ENCODE measurements at regions of chr6 and their contacts with region 1.

Region 1: DNA sequence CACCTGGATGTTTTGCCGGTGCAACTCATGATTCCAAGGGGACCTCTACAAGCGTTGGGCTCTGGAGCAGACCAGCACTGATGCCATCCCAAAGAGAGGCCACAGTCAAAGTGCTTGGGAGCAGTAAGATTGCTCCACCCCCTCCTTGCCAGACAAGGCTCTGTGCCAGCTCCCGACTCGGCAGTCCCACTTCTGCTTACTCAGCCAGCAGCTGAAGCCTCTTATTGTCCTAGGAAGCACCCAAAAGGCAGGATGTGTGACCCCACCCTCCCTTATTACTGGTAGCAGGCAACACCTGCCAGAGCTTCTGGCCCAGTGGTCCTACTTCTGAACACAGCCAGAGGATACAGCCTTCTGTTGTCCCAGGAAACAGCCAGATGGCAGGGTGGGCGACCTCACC is 614.2 kb downstream of the TENT5A start:
- DNase-seq: no peak
- H3K27ac ChIP-seq: no peak overlapping the region
- CTCF ChIP-seq: no peak

Region 2: DNA sequence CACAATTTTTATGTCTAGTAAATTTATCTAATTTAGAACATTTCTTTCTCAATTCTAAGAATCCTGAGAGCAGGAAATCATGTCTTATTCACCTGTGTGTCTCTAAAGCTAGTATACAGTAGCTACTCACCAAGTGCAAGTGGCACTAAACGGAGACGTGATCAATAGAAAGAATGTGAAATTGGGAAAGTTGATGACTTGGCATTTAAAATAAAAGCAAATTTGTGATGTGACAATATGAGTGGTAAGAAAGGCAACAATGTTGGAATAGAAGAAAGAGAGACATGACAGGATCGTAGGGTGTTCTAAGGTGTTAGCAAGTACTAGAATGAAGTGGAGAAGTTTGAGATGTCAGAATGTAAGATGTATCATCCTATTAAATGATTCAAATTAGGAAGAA is 305.9 kb before region 1 on chr6:
- CTCF ChIA-PET with region 1: interaction called, 12 read pairs
- POLR2A ChIA-PET with region 1: no interaction called
- DNase-seq: no peak
- H3K27ac ChIP-seq: no peak overlapping the region
- CTCF ChIP-seq: no peak

Region 3: GRCh38 chr6:81353262-81353661 is 215.0 kb after region 1 on chr6:
- CTCF ChIA-PET with region 1: no interaction called
- POLR2A ChIA-PET with region 1: no interaction called
- DNase-seq: no peak
- H3K27ac ChIP-seq: no peak overlapping the region
- CTCF ChIP-seq: no peak